MCF 10A (cell line): ENCODE measurements at regions of chr6 and their contacts with region 1.

Region 1: GRCh38 chr6:57316581-57317059 is 810 bp upstream of the PRIM2 start:
- DNase-seq: peak; percentile 94
- H3K4me3 Mint-ChIP-seq: peak overlapping the region; percentile 95
- H3K27ac Mint-ChIP-seq: peak overlapping the region; percentile 88
- H3K4me1 Mint-ChIP-seq: peaks cover 32% of the 10 kb centered on the region
- H3K27me3 Mint-ChIP-seq: no peaks in the 10 kb centered on the region
- CTCF ChIP-seq: peak; percentile 82

Region 2: GRCh38 chr6:57021086-57021720 is 295.4 kb before region 1 on chr6:
- CTCF ChIA-PET with region 1: interaction called, 24 read pairs
- POLR2A ChIA-PET with region 1: no interaction called
- intact Hi-C with region 1: loop called (anchors 10 kb)
- DNase-seq: peak; percentile 42
- H3K4me3 Mint-ChIP-seq: no peak overlapping the region
- H3K27ac Mint-ChIP-seq: no peak overlapping the region
- H3K4me1 Mint-ChIP-seq: no peaks in the 10 kb centered on the region
- H3K27me3 Mint-ChIP-seq: no peaks in the 10 kb centered on the region
- CTCF ChIP-seq: peak; percentile 38

Region 3: DNA sequence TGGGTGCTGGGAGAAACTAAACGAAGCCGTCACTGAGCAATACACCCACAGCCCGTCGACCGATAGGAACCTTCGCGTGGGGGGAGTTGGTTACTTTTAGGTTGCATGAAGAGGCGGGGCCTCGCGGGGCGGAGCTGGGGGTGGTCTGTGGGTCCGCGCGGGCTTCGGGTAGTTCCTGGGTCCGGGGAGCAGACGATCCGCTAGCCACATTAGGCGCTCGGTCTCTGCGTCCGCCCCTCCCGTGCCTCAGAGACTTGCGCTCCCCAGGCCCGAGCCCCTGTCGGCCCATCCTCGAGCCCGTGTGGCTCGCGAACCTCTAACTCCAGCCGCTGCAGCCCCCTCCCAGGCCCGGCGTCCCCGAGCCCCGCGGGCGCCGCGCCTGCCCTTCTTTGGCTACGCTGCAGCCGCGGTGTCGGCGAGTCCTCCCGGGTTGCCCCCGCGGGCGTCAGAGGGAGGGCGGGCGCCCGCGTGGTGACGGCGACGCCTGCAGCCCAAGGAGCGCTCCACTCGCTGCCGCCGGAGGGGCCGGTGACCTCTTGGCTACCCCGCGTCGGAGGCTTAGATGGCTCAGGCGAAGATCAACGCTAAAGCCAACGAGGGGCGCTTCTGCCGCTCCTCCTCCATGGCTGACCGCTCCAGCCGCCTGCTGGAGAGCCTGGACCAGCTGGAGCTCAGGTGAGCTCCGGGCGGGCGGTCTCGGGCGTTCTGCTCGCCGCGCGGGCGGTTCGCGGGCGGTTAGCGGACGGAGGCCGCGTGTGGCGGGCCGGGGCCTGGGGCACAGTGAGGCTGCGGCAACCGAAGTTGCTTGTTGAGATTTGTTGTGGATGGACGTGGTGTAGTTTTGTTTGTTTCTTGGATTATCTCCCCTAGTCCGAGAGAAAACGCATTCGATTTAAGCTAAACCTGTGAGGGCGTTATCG is 144.2 kb before region 1 on chr6 and contains the start of gene BAG2:
- CTCF ChIA-PET with region 1: interaction called, 8 read pairs
- POLR2A ChIA-PET with region 1: interaction called, 5 read pairs
- intact Hi-C with region 1: loop called (anchors 1 kb)
- DNase-seq: peak; percentile 85
- H3K4me3 Mint-ChIP-seq: peak within 1 kb of the TSS; percentile 91
- H3K27ac Mint-ChIP-seq: peak within 1 kb of the TSS; percentile 28
- H3K4me1 Mint-ChIP-seq: peaks cover 13% of the 10 kb centered on the region
- H3K27me3 Mint-ChIP-seq: no peaks in the 10 kb centered on the region
- CTCF ChIP-seq: no peak
- total RNA-seq, gene BAG2: 3.6 and 4.2 TPM in 2 replicates

Region 4: DNA sequence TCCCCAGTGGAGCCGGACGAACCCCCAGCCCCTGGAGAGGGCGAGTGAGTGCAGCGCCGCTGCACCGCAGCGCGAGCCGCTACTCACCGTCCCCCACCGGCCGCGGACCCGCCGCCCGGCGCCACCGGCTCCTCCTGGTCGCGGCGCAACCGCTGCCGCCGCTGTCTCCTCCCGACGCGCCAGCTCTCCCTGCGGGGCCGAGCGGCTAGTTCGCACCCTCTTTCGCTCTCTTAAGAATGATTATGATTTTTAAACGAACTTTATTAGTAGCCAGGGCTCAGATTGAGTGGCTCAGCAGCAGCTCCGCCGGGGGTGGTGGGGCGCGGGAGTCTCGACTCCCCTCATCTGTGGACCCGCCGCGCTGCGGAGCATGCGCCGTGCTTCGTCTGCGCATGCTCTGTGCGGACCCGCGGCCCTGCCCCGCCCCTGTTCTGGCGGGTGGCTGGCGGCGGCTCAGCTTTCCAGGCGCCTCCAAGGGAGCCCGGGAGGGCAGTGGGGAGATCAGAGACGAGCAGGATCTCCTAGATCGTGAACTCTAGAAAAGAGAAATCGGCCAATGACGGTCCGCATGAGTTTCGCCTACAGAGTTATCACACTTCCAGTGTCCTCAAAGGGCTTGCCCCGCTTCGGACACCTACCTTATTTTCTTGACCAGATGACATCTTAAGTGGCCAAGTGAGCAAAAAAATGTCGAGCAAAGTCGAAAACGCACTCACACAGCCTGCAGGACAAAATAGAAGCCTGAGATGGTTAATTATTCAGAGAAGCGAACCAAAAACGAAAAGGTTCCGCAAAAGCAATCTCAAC is 94.5 kb before region 1 on chr6 and contains the start of gene RAB23:
- CTCF ChIA-PET with region 1: interaction called, 15 read pairs
- POLR2A ChIA-PET with region 1: interaction called, 28 read pairs
- intact Hi-C with region 1: no loop called
- DNase-seq: peak; percentile 83
- H3K4me3 Mint-ChIP-seq: peak within 1 kb of the TSS; percentile 84
- H3K27ac Mint-ChIP-seq: peak within 1 kb of the TSS; percentile 56
- H3K4me1 Mint-ChIP-seq: peaks cover 31% of the 10 kb centered on the region
- H3K27me3 Mint-ChIP-seq: no peaks in the 10 kb centered on the region
- CTCF ChIP-seq: no peak
- total RNA-seq, gene RAB23: 8.4 and 13.3 TPM in 2 replicates